ENCODE measurements at regions of chr10 and their contacts with region 1.

Region 1: DNA sequence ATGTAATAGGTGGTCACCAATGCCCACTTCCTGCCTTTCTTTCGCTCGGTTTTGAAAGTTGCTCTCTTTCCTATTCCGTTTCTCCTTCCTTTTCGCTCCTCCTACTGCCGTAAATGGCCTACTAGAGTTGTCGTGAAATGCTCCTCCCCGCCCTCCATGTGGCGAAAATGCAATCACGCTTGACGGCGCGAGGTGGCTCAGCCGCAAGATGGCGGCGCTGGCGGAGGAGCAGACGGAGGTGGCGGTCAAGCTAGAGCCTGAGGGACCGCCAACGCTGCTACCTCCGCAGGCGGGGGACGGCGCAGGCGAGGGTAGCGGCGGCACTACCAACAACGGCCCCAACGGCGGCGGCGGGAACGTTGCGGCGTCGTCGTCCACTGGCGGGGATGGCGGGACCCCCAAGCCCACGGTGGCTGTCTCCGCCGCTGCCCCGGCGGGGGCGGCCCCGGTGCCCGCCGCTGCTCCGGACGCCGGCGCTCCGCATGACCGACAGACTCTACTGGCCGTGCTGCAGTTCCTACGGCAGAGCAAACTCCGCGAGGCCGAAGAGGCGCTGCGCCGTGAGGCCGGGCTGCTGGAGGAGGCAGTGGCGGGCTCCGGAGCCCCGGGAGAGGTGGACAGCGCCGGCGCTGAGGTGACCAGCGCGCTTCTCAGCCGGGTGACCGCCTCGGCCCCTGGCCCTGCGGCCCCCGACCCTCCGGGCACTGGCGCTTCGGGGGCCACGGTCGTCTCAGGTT is at the start of gene TAF5:
- DNase-seq: peak; percentile 97
- H3K4me3 Mint-ChIP-seq: peak within 1 kb of the TSS; percentile 93
- H3K27ac Mint-ChIP-seq: peak within 1 kb of the TSS; percentile 92
- H3K4me1 Mint-ChIP-seq: peaks cover 12% of the 10 kb centered on the region
- H3K27me3 Mint-ChIP-seq: peaks cover 4% of the 10 kb centered on the region
- total RNA-seq, gene TAF5: 11.9 and 12.1 TPM in 2 replicates

Region 2: GRCh38 chr10:102853944-102854694 is 513.8 kb before region 1 on chr10 and contains the start of gene BORCS7:
- intact Hi-C with region 1: loop called (anchors 1 kb)
- DNase-seq: peak; percentile 96
- H3K4me3 Mint-ChIP-seq: peak within 1 kb of the TSS; percentile 98
- H3K27ac Mint-ChIP-seq: peak within 1 kb of the TSS; percentile 97
- H3K4me1 Mint-ChIP-seq: peaks cover 13% of the 10 kb centered on the region
- H3K27me3 Mint-ChIP-seq: no peaks in the 10 kb centered on the region
- total RNA-seq, gene BORCS7: 8.1 and 9.8 TPM in 2 replicates

Region 3: DNA sequence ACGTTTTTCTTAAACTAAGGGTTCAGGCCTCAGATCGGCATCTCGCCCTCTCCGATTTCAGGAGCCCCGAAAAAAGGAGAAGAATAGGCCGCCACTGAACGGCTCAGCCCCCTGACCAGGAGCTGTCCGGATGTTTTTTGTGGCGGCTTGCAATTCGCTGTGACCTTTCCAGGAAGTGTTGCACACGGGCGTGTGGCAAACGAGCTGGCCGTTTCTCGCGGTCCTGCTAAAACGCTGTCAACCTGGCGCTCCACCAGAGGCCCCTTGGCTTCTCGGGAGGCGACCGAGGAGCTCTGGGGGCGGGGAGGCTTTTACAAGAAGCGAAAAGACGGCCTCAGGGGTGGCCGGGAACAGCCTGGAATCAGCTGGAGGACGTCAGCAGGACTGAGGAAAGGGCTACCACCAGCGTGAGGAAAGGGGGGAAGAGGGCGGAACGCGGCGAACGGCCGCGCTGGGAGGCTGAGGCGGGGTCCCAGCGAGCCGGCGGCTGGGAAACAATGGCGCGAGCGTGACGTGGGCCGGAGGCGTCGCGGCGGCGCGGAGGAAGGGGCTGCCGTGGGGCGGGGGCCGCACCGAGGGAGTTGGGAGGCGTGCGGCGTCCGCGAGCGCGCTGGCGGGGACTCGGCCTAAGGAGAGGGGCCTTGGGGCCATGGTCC is 175.4 kb before region 1 on chr10:
- intact Hi-C with region 1: loop called (anchors 10 kb)
- DNase-seq: peak; percentile 91
- H3K4me3 Mint-ChIP-seq: peak overlapping the region; percentile 100
- H3K27ac Mint-ChIP-seq: peak overlapping the region; percentile 99
- H3K4me1 Mint-ChIP-seq: peaks cover 31% of the 10 kb centered on the region
- H3K27me3 Mint-ChIP-seq: no peaks in the 10 kb centered on the region

Region 4: GRCh38 chr10:103281753-103282152 is 86.2 kb before region 1 on chr10:
- intact Hi-C with region 1: no loop called
- DNase-seq: no peak
- H3K4me3 Mint-ChIP-seq: no peak overlapping the region
- H3K27ac Mint-ChIP-seq: no peak overlapping the region
- H3K4me1 Mint-ChIP-seq: peaks cover 7% of the 10 kb centered on the region
- H3K27me3 Mint-ChIP-seq: peaks cover 57% of the 10 kb centered on the region

Region 5: DNA sequence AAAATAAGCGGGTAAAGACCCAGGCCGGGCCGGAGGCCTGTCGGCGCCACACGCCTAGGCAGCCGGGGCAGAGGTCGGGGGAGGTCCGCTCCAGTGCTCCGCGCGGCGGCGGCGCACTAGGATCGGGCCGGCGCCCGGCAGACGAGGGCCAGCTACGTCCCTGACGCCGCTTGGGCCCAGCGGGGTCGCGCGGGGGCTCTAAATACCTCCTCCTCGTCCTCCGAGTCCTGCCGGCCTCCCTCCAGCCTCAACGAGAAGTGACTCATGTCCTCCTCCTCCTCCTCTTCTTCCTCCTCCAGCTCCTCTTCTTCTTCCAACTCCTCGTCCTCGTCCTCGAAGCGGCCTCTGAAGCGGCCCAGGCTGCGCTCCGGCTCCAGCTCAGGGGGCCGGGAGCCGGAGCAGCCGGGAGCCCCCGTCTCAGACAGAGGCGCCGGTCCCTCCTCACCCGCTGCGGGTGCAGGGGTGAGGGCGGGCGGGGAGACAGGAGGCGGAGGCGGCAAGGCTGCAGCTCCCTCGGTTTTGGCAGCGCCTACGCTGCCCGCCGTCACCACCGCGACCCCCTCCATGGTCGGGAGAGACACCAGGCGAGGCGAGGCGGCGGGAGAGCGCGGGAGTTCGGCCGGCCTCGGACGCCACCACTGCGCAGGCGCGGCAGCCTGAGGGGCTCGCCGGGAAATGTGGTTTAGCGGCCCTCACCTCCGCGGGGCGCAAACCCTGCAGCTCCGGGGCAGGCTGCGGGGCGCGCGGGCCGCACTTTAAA is 17.3 kb before region 1 on chr10 and contains the start of gene PCGF6:
- intact Hi-C with region 1: loop called (anchors 1 kb)
- DNase-seq: peak; percentile 94
- H3K4me3 Mint-ChIP-seq: peak within 1 kb of the TSS; percentile 96
- H3K27ac Mint-ChIP-seq: peak within 1 kb of the TSS; percentile 95
- H3K4me1 Mint-ChIP-seq: peaks cover 6% of the 10 kb centered on the region
- H3K27me3 Mint-ChIP-seq: no peaks in the 10 kb centered on the region
- total RNA-seq, gene PCGF6: 19.3 and 19.7 TPM in 2 replicates

Region 6: GRCh38 chr10:103396064-103396788 is 28.3 kb after region 1 on chr10 and contains the starts of genes ATP5MK and PDCD11:
- intact Hi-C with region 1: loop called (anchors 1 kb)
- DNase-seq: peak; percentile 99
- H3K4me3 Mint-ChIP-seq: peak within 1 kb of the TSS; percentile 87
- H3K27ac Mint-ChIP-seq: peak within 1 kb of the TSS; percentile 81
- H3K4me1 Mint-ChIP-seq: peaks cover 41% of the 10 kb centered on the region
- H3K27me3 Mint-ChIP-seq: no peaks in the 10 kb centered on the region
- total RNA-seq, gene ATP5MK: 477 and 504 TPM in 2 replicates
- total RNA-seq, gene PDCD11: 103 and 105 TPM in 2 replicates

Region 7: DNA sequence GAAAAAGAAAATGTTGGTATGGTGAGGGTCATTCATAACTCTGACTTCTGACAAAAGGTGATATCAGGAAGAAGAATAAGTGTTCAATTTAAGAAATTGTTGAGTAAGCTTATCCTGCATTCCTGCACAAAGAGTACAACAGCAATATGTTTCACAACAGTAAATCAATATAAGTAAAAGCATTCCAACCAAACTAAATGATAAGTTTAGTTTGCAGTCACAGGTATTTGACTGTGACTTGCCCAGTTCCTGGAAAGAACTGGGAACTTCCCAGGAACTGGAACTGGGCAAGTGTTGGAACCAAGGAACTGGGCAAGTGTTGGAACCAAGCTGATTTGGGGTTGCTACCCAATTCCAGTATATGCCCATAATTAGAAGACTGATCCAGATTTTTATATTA is 160.6 kb after region 1 on chr10:
- intact Hi-C with region 1: no loop called
- DNase-seq: no peak
- H3K4me3 Mint-ChIP-seq: no peak overlapping the region
- H3K27ac Mint-ChIP-seq: no peak overlapping the region
- H3K4me1 Mint-ChIP-seq: no peaks in the 10 kb centered on the region
- H3K27me3 Mint-ChIP-seq: peaks cover 31% of the 10 kb centered on the region